ENCODE measurements at regions of chr5 and their contacts with region 1.

Region 1: DNA sequence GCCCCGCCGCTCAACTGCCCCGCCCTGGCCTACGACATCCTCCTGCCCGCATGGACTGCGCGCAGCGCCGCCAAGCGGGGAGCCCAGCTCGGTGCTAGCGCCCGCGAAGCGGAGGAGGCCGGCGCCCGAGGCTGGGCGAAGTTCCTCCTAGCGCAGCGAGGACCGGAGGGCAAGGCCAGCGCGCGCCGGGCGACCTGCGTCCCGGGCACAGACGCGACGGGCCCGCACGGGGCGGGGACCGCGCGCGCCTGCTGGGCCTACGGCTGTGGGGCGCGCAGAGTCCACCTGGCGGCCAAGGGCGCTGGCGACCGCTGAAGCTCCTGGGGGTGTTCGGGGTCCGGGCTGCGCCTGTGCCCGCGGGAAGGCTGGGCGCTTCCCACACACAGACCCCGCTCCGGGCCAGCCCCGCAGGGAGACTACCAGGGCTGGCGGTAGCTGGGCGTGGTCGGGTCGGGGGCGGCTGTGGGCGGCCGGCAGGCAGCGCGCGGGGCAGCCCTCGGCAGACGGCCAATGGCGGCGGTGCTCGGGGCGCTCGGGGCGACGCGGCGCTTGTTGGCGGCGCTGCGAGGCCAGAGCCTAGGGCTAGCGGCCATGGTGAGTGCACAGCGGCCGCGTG is at the start of gene PCBD2:
- DNase-seq: peak; percentile 95
- H3K4me3 Mint-ChIP-seq: peak within 1 kb of the TSS; percentile 98
- H3K27ac Mint-ChIP-seq: peak within 1 kb of the TSS; percentile 99
- H3K4me1 Mint-ChIP-seq: peaks cover 17% of the 10 kb centered on the region
- H3K27me3 Mint-ChIP-seq: no peaks in the 10 kb centered on the region
- total RNA-seq, gene PCBD2: 9.6 to 10.5 TPM

Region 2: GRCh38 chr5:134176511-134177368 is 728.0 kb before region 1 on chr5 and contains the start of gene SKP1:
- CTCF ChIA-PET with region 1: no interaction called
- intact Hi-C with region 1: loop called (anchors 1 kb)
- DNase-seq: peak; percentile 83
- H3K4me3 Mint-ChIP-seq: peak within 1 kb of the TSS; percentile 96
- H3K27ac Mint-ChIP-seq: peak within 1 kb of the TSS; percentile 94
- H3K4me1 Mint-ChIP-seq: peaks cover 31% of the 10 kb centered on the region
- H3K27me3 Mint-ChIP-seq: no peaks in the 10 kb centered on the region
- total RNA-seq, gene SKP1: 307 to 309 TPM

Region 3: GRCh38 chr5:134586866-134587524 is 317.7 kb before region 1 on chr5:
- CTCF ChIA-PET with region 1: interaction called, 6 read pairs
- intact Hi-C with region 1: loop called (anchors 1 kb)
- DNase-seq: peak; percentile 94
- H3K4me3 Mint-ChIP-seq: no peak overlapping the region
- H3K27ac Mint-ChIP-seq: no peak overlapping the region
- H3K4me1 Mint-ChIP-seq: peaks cover 13% of the 10 kb centered on the region
- H3K27me3 Mint-ChIP-seq: no peaks in the 10 kb centered on the region

Region 4: GRCh38 chr5:134758504-134759341 is 146.0 kb before region 1 on chr5 and contains the start of gene DDX46:
- CTCF ChIA-PET with region 1: interaction called, 7 read pairs
- intact Hi-C with region 1: loop called (anchors 1 kb)
- DNase-seq: peak; percentile 97
- H3K4me3 Mint-ChIP-seq: peak within 1 kb of the TSS; percentile 99
- H3K27ac Mint-ChIP-seq: peak within 1 kb of the TSS; percentile 80
- H3K4me1 Mint-ChIP-seq: peaks cover 34% of the 10 kb centered on the region
- H3K27me3 Mint-ChIP-seq: no peaks in the 10 kb centered on the region
- total RNA-seq, gene DDX46: 47.3 to 48.0 TPM

Region 5: DNA sequence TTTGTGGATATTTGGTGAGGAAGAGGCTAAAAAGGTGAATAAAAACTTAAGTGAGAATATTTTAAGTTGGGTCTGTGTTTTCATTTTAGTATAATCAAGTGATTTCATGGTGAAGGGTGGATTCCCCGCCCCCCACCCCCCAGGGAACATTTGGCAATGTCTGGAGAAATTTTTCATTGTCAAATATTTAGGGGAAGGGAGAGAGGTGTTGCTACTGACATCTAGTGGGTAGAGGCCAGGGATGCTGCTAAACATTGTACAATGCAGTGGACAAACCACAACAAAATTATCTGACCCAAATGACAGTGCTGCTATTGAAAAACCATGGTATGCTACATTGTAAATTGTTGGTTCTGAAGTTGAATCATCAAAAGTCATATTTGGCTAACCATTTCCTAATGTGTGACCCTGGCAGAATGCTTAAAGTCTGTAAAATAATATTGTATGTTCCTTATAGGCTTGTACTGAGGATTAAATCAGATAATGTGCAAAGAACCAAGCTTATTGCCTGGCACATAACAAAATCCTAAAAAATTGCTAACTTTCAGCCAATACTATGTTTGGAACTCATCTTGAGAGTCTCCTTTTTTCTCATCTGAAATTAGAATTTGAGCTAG is 53.3 kb before region 1 on chr5:
- CTCF ChIA-PET with region 1: interaction called, 9 read pairs
- intact Hi-C with region 1: loop called (anchors 1 kb)
- DNase-seq: no peak
- H3K4me3 Mint-ChIP-seq: no peak overlapping the region
- H3K27ac Mint-ChIP-seq: no peak overlapping the region
- H3K4me1 Mint-ChIP-seq: peaks cover 38% of the 10 kb centered on the region
- H3K27me3 Mint-ChIP-seq: no peaks in the 10 kb centered on the region

Region 6: GRCh38 chr5:135332519-135333150 is 427.9 kb after region 1 on chr5:
- CTCF ChIA-PET with region 1: no interaction called
- intact Hi-C with region 1: loop called (anchors 5 kb)
- DNase-seq: no peak
- H3K4me3 Mint-ChIP-seq: no peak overlapping the region
- H3K27ac Mint-ChIP-seq: no peak overlapping the region
- H3K4me1 Mint-ChIP-seq: no peaks in the 10 kb centered on the region
- H3K27me3 Mint-ChIP-seq: no peaks in the 10 kb centered on the region

Measured in activated naive CD4-positive, alpha-beta T cell treated with anti-CD3 and anti-CD28 coated beads for 36 hours (primary cell).